Mammary epithelial cell (primary cell): ENCODE measurements at regions of chrX and their contacts with region 1.

Region 1: DNA sequence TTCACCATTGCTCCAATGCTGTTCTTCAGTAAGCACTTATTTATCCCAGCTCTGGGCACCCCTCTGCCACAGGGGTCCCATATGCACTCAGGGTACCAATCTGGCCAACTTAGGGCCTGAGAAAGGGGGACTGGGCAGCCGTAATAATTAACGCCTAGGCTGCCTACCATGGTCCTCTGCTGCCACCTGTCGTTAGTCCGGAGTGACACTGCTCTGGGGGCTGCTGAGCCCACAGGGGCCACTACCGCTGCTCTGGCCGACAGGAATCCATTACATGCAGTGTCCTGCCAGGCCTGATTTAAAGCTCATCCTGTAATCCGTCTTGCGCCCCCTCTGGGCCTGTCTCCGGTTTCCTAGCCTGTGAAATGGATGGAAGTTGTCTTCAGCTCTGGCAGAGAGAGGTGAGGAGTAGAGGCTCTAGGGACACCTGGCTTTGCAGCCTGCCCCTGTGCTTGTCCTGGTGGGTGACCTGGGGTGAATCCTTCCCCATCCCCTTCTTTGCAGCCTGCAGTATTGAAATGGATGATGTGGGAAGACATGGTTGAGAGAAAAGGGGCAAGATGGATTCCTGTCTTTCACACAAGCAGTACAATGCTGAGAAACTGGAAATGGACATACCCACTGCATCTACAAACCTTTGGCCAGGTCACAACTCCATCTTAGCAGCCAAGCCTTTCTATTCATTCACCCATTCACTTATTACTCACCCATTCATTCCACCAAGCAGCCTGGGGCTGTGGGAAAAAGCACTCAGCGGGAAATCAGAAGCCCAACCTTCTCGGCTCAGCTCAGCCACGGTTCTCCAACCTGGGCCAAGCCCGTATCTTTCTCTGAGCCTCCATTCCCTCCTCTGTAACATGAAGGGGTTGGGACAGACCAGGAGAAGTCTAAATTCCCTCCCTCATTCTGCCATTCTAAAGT is 116.3 kb upstream of the NALF2 start:
- DNase-seq: peak; percentile 8
- H3K4me3 ChIP-seq: no peak overlapping the region
- H3K27ac ChIP-seq: no peak overlapping the region
- H3K4me1 ChIP-seq: peaks cover 9% of the 10 kb centered on the region
- H3K27me3 ChIP-seq: no peaks in the 10 kb centered on the region
- CTCF ChIP-seq: peak; percentile 64 to 85

Region 2: DNA sequence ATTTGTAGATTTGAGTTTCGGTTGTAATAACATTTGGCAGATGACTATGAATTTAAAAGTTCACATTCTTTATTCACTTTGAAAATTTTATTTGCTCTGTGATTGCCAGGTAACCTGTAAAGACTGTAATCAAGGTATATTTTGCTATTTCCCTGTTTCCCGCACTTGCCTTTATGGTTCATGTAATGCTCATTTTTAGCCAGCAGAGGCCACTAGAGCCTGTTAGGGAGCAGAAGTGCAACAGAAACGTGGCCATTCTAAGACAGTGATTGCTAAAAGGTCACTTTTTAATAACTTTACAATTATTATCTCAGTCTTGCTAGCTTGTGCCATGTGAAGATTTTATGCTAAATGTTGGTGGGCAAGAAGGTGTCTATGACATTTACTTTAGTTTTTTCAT is 876.6 kb before region 1 on chrX:
- CTCF ChIA-PET with region 1: no interaction called
- dilution Hi-C with region 1: no loop called
- in situ Hi-C with region 1: no loop called
- intact Hi-C with region 1: loop called (anchors 1 kb)
- DNase-seq: peak; percentile 32
- H3K4me3 ChIP-seq: no peak overlapping the region
- H3K27ac ChIP-seq: no peak overlapping the region
- H3K4me1 ChIP-seq: no peaks in the 10 kb centered on the region
- H3K27me3 ChIP-seq: no peaks in the 10 kb centered on the region
- CTCF ChIP-seq: peak; percentile 85 to 86

Region 3: DNA sequence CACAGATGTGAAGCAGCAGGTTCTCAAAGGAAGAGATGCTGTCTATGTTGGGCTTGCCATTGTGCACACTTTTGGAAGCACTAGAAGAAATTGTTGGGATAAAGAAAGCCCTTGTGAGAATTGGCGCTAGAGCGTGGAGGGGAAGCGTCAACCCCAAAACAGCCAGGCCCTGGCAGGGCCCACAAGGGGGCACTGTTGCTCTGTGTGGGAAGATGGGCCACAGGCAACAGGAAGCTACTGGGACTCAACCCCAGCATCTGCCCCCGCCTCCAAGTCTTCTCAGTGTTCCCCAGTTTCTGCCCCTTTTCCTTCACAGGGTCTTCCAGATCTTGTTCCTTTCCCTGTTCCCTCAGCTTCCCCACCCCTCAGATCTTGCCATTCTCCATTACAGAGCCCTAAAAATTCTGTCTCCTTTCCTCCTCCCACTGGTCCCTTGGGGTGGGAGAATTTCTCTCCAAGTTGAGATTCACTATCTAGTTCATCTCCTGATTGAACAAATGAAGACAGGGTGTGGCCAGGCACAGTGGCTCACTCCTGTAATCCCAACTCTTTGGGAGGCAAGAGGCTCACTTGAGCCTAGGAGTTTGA is 654.8 kb before region 1 on chrX:
- CTCF ChIA-PET with region 1: no interaction called
- dilution Hi-C with region 1: no loop called
- in situ Hi-C with region 1: no loop called
- intact Hi-C with region 1: loop called (anchors 1 kb)
- DNase-seq: peak; percentile 34
- H3K4me3 ChIP-seq: no peak overlapping the region
- H3K27ac ChIP-seq: no peak overlapping the region
- H3K4me1 ChIP-seq: no peaks in the 10 kb centered on the region
- H3K27me3 ChIP-seq: peaks cover 3% of the 10 kb centered on the region
- CTCF ChIP-seq: peak; percentile 78 to 84

Region 4: GRCh38 chrX:68822641-68823410 is 565.0 kb before region 1 on chrX:
- CTCF ChIA-PET with region 1: interaction called, 3 read pairs
- dilution Hi-C with region 1: no loop called
- in situ Hi-C with region 1: loop called in 1 of 2 experiments (anchors 25 kb)
- intact Hi-C with region 1: loop called (anchors 1 kb)
- DNase-seq: no peak
- H3K4me3 ChIP-seq: no peak overlapping the region
- H3K27ac ChIP-seq: no peak overlapping the region
- H3K4me1 ChIP-seq: peaks cover 4% of the 10 kb centered on the region
- H3K27me3 ChIP-seq: no peaks in the 10 kb centered on the region
- CTCF ChIP-seq: peak; percentile 71 to 72

Region 5: DNA sequence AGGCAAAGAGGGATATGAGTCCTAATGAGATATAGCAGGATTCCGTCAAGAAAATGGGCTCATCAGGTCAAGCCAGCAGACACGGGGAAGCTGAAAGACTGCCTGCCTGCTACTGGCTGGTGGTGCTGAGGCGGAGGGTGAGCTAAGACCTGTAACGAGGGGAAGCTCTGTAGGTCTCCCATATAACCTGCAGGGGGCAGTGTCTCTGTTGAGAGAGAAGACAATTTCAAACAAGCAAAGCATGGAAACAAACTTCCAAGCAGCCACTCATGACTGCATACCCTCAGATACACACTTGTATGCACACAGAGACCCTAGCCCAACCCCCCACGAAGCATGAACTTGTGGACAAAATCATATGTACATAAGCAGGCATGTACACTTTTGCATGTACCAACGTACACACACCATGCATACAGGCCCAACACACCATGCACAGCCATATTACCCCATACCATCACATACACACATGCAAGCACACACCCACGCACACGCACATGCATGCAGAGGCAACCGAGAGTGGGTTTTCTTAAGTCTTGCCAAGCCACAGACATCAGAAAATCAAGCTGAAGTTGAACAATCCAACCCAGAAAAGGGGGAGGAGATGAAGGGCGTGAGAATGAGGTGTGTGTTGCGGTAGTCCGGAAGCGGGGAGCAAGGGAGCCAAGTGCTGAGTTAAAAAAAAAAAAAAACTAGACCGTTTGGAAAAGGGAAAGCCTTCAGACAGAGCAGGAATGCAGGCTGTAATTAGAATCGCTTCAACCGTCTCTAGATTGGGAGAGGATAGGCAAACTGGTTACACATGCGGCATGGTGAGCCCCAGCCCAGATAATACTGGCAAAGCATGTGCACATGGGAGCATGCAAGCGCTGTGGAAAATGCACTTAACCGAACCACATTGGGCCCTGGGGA is 293.6 kb before region 1 on chrX:
- CTCF ChIA-PET with region 1: no interaction called
- dilution Hi-C with region 1: no loop called
- in situ Hi-C with region 1: no loop called
- intact Hi-C with region 1: loop called (anchors 10 kb)
- DNase-seq: peak; percentile 26
- H3K4me3 ChIP-seq: no peak overlapping the region
- H3K27ac ChIP-seq: no peak overlapping the region
- H3K4me1 ChIP-seq: no peaks in the 10 kb centered on the region
- H3K27me3 ChIP-seq: no peaks in the 10 kb centered on the region
- CTCF ChIP-seq: peak; percentile 54 to 56

Region 6: DNA sequence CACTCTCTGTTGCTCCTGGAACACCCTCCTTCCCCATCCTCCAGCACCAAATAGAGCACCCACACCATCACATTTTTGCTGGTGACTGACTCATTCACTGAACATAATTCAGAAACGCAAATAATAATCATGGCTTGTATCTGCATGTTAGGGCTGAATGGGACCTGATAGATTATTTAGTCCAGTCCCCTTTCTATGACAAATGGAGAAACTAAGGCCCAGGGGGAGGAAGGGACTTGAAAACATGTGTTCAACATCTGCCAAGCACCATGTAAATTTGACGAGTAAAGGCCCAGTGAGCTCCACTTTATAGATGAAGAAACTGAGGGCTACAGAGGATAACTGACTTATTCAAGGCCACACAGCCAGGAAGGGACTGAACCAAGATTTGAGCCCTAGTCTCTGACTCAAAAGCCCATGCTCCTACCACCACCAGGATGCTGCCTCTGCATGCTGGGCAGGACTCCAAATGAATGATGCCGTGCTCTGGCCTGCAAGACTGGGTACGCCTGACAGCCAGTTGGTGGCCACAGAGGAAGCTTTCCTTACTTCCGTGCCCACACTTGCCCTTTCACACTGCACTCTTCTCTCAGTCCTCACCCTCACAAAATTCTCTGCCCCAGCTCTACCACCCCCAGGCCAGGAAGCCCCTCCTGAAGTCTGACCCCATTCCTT is 89.2 kb before region 1 on chrX:
- CTCF ChIA-PET with region 1: no interaction called
- dilution Hi-C with region 1: no loop called
- in situ Hi-C with region 1: no loop called
- intact Hi-C with region 1: loop called (anchors 1 kb)
- DNase-seq: peak; percentile 57
- H3K4me3 ChIP-seq: no peak overlapping the region
- H3K27ac ChIP-seq: no peak overlapping the region
- H3K4me1 ChIP-seq: peaks cover 12% of the 10 kb centered on the region
- H3K27me3 ChIP-seq: no peaks in the 10 kb centered on the region
- CTCF ChIP-seq: peak in 1 of 2 donors; percentile 10